IMR-90 (cell line): ENCODE measurements at regions of chr2 and their contacts with region 1.

Region 1: GRCh38 chr2:218466016-218466521 is 47.1 kb downstream of the VIL1 start:
- DNase-seq: peak; percentile 36
- ATAC-seq: peak; percentile 77
- H3K4me3 ChIP-seq: no peak overlapping the region
- H3K27ac ChIP-seq: no peak overlapping the region
- H3K4me1 ChIP-seq: no peaks in the 10 kb centered on the region
- H3K27me3 ChIP-seq: no peaks in the 10 kb centered on the region
- CTCF ChIP-seq: peak; percentile 56
- POLR2A ChIP-seq: no peak
- RAD21 ChIP-seq: peak; percentile 46

Region 2: DNA sequence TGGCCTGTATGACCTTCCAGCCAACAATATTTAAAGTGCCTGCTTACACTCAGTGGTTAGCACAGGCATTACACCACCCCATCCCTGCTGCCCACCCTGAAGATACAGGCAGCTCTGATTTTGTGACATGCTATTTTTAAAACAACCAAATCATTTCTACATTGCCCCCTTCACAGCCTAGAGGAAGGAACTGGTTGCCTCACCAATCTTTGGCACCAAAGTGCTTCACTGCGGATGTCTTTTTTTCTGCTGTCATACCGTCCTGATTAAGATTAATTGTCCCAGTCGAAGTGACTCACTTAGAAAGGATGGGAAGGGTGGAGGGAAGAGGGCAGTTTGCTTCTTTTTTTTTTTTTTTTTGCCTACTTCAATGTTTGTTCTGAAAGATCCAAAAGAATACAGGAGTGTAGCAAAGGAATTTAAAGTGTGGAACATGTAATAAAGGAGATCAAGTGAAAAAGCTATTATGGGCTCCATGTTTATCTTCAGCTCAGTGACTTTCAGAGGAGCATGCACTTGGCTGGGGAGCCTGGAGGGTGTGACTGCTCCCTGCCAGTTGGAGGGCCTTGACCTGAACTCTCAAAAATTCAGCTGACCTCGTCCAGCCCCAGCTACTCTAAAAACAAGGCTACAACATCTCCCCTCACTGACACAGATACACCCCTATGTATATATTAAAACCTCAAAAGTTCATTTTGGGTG is 1105.1 kb before region 1 on chr2:
- CTCF ChIA-PET with region 1: no interaction called
- POLR2A ChIA-PET with region 1: no interaction called
- dilution Hi-C with region 1: no loop called
- in situ Hi-C with region 1: no loop called
- intact Hi-C with region 1: no loop called
- DNase-seq: peak; percentile 89
- ATAC-seq: peak; percentile 71
- H3K4me3 ChIP-seq: no peak overlapping the region
- H3K27ac ChIP-seq: peak overlapping the region; percentile 96
- H3K4me1 ChIP-seq: peaks cover 37% of the 10 kb centered on the region
- H3K27me3 ChIP-seq: no peaks in the 10 kb centered on the region
- CTCF ChIP-seq: peak; percentile 5; the same call in 1 of the 2 replicates
- POLR2A ChIP-seq: no peak
- RAD21 ChIP-seq: no peak

Region 3: DNA sequence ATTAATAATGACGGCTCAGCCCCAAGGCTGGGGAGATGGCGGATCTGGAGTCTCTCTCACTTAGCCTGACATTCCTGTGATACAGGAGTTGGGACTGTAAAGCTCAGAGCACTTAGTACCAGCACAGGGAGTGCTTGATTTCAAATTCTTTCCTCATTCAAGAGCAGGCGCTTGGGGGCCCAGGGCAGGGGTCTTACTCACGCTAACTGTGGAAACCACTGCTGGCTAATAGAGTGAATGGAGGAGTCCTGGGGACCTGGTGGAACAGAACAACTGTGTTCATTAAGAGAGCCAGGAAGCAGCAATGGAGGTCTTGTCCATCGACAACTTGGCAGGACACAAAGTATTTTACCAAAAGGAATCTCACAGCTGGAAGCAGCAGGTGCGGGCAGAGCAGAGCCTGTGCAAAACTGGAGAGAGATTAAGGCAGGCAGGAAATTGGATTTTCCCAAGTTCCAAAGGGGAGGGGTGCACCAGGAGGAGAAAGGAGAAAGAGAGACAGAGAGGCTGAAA is 822.2 kb before region 1 on chr2:
- CTCF ChIA-PET with region 1: no interaction called
- POLR2A ChIA-PET with region 1: no interaction called
- dilution Hi-C with region 1: no loop called
- in situ Hi-C with region 1: no loop called
- intact Hi-C with region 1: no loop called
- DNase-seq: no peak
- ATAC-seq: no peak
- H3K4me3 ChIP-seq: no peak overlapping the region
- H3K27ac ChIP-seq: no peak overlapping the region
- H3K4me1 ChIP-seq: no peaks in the 10 kb centered on the region
- H3K27me3 ChIP-seq: no peaks in the 10 kb centered on the region
- CTCF ChIP-seq: no peak
- POLR2A ChIP-seq: no peak
- RAD21 ChIP-seq: no peak

Region 4: DNA sequence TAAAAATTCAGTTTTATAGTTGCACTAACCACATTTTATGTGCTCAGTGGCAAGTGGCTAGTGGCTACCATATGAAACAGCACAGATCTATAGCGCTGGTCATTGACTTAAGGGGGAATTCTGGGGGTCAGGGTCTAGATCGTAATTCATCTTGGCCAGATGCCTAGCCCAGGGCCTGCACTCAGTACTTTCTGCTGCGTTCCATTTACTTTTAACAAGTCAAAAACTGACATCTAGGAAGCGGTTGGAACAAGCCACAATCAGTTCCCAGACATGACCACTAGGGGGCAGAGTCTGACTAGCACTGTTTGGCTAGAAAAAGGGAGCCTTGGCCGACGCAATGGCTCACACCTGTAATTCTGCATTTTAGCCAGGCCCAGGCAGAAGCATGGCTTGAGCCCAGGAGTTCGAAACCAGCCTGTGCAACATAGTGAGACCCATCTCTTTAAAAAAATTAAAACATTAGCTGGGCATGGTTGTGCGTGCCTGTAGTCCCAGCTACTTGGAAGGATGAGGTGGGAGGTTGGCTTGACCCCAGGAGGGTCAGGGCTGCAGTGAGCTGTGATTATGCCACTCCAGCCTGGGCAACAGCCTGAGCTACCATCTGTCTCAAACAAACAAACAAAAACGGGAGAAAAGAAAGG is 164.8 kb before region 1 on chr2:
- CTCF ChIA-PET with region 1: no interaction called
- POLR2A ChIA-PET with region 1: no interaction called
- dilution Hi-C with region 1: no loop called
- in situ Hi-C with region 1: loop called (anchors 10 kb)
- intact Hi-C with region 1: loop called (anchors 1 kb)
- DNase-seq: peak; percentile 82
- ATAC-seq: peak; percentile 93
- H3K4me3 ChIP-seq: no peak overlapping the region
- H3K27ac ChIP-seq: no peak overlapping the region
- H3K4me1 ChIP-seq: peaks cover 4% of the 10 kb centered on the region; the same call in 1 of the 2 replicates
- H3K27me3 ChIP-seq: no peaks in the 10 kb centered on the region
- CTCF ChIP-seq: peak; percentile 93
- POLR2A ChIP-seq: no peak
- RAD21 ChIP-seq: peak; percentile 96

Region 5: GRCh38 chr2:218406209-218406948 is 59.7 kb before region 1 on chr2:
- CTCF ChIA-PET with region 1: no interaction called
- POLR2A ChIA-PET with region 1: no interaction called
- dilution Hi-C with region 1: no loop called
- in situ Hi-C with region 1: loop called (anchors 5 kb)
- intact Hi-C with region 1: loop called (anchors 1 kb)
- DNase-seq: peak; percentile 89
- ATAC-seq: peak; percentile 93
- H3K4me3 ChIP-seq: peak overlapping the region; percentile 44
- H3K27ac ChIP-seq: peak overlapping the region; percentile 78
- H3K4me1 ChIP-seq: peaks cover 17% of the 10 kb centered on the region
- H3K27me3 ChIP-seq: no peaks in the 10 kb centered on the region
- CTCF ChIP-seq: peak; percentile 88
- POLR2A ChIP-seq: peak; percentile 42; the same call in 1 of the 2 replicates
- RAD21 ChIP-seq: peak; percentile 79